ENCODE measurements at regions of chr2 and their contacts with region 1.

Region 1: GRCh38 chr2:201451292-201452057 is at the starts of genes STRADB and TRAK2:
- DNase-seq: peak; percentile 89 to 98 (median 95)
- ATAC-seq: peak; percentile 89
- H3K4me3 ChIP-seq: peak within 1 kb of the TSS; percentile 64 to 79
- H3K4me3 Mint-ChIP-seq: peak within 1 kb of the TSS; percentile 96
- H3K27ac ChIP-seq: peak within 1 kb of the TSS; percentile 74 to 79
- H3K27ac Mint-ChIP-seq: peak within 1 kb of the TSS; percentile 95
- H3K4me1 ChIP-seq: peaks cover 41% of the 10 kb centered on the region
- H3K4me1 Mint-ChIP-seq: peaks cover 59% of the 10 kb centered on the region
- H3K27me3 ChIP-seq: no peaks in the 10 kb centered on the region
- H3K27me3 Mint-ChIP-seq: no peaks in the 10 kb centered on the region
- CTCF ChIP-seq: no peak
- total RNA-seq, gene STRADB: 4.5 to 5.8 TPM
- total RNA-seq, gene TRAK2: 20.1 to 22.5 TPM

Region 2: GRCh38 chr2:200811336-200812121 is 639.9 kb before region 1 on chr2 and contains the start of gene BZW1:
- CTCF ChIA-PET with region 1: no interaction called
- POLR2A ChIA-PET with region 1: interaction called, 3 read pairs
- intact Hi-C with region 1: loop called in 1 of 2 experiments (anchors 2 kb)
- DNase-seq: peak; percentile 94 to 98 (median 97)
- ATAC-seq: peak; percentile 82
- H3K4me3 ChIP-seq: peak within 1 kb of the TSS; percentile 69 to 90
- H3K4me3 Mint-ChIP-seq: peak within 1 kb of the TSS; percentile 99
- H3K27ac ChIP-seq: peak within 1 kb of the TSS; percentile 98
- H3K27ac Mint-ChIP-seq: peak within 1 kb of the TSS; percentile 98
- H3K4me1 ChIP-seq: peaks cover 33% of the 10 kb centered on the region
- H3K4me1 Mint-ChIP-seq: peaks cover 48% of the 10 kb centered on the region
- H3K27me3 ChIP-seq: no peaks in the 10 kb centered on the region
- H3K27me3 Mint-ChIP-seq: no peaks in the 10 kb centered on the region
- CTCF ChIP-seq: no peak
- total RNA-seq, gene BZW1: 330 to 338 TPM

Region 3: DNA sequence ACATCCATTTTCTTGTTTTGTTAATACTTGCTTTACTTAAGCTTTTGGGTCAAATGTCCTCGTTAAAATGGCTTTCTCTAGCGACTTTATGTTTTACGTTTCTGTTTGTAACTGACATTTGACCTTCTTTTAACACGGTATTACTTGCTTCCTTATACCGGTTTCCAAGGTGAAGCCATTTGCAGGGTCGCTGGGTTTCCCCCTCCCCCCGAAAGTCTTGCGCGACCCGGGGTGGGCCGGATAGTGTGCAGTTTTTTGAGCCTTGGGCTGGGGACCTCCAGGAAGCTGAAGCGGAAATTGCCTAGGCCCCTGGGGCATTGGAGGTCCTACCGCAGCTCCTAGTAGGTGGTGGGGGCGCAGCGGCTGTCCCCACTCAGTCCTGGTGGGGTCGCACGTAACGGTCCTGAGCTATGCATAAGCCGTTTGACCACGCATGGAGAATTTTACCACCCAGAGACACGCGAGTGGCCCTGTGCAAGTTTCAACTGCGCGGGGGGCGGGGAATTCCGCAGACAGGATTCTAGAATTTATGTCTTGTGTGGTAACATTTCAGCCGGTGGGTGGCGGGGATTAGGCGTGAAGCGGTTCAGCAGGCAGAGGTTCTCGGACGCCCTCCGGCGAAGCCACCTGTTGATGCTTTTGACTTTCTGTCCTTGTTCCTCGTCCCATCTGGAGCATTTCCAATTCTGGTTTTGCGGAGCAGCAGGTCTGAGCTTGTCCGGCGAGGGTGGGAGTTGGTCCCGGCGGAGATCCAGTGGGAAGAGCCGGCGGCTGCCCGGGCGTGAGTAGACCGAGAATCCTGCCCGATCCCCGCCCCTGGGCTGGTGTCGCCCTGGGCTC is 333.1 kb before region 1 on chr2:
- CTCF ChIA-PET with region 1: no interaction called
- POLR2A ChIA-PET with region 1: interaction called, 5 read pairs
- intact Hi-C with region 1: loop called in 1 of 2 experiments (anchors 1 kb)
- DNase-seq: peak; percentile 77 to 94 (median 89)
- ATAC-seq: peak; percentile 43
- H3K4me3 ChIP-seq: peak overlapping the region; percentile 82 to 95
- H3K4me3 Mint-ChIP-seq: peak overlapping the region; percentile 99
- H3K27ac ChIP-seq: peak overlapping the region; percentile 92
- H3K27ac Mint-ChIP-seq: peak overlapping the region; percentile 100
- H3K4me1 ChIP-seq: peaks cover 47% of the 10 kb centered on the region
- H3K4me1 Mint-ChIP-seq: peaks cover 67% of the 10 kb centered on the region
- H3K27me3 ChIP-seq: no peaks in the 10 kb centered on the region
- H3K27me3 Mint-ChIP-seq: no peaks in the 10 kb centered on the region
- CTCF ChIP-seq: peak; percentile 64

Region 4: DNA sequence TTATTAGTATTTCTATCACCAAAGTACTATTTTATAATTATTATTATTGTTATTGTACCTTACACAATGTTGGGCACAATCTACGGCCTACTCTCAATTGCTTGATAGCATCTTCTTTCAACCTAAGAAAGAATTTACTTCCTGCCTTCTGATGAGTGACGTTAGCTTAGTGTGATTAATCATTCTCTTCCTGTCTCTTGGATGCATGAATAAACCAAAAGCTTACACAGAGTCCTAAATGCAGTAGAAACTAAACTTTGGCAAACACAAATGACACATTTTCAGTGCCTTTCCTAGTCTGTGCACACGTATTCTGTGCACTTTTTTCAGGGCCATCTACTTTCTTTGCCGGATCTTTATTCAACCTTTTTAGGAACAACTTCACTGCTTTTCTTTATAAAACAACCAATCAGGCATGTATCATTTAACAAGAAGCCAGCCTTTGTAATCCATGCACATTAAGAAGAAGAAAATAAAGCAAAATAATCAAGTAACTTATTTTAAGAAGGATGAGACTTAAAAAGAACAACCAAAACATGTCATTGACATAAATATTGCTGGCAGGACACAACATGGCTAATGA is 19.3 kb before region 1 on chr2:
- CTCF ChIA-PET with region 1: interaction called, 4 read pairs
- POLR2A ChIA-PET with region 1: interaction called, 21 read pairs
- intact Hi-C with region 1: loop called (anchors 1 to 2 kb)
- DNase-seq: peak in 2 of 9 experiments; percentile 36 to 63
- ATAC-seq: peak; percentile 93
- H3K4me3 ChIP-seq: no peak overlapping the region
- H3K4me3 Mint-ChIP-seq: peak overlapping the region; percentile 12
- H3K27ac ChIP-seq: peak overlapping the region; percentile 1 to 49
- H3K27ac Mint-ChIP-seq: peak overlapping the region; percentile 90
- H3K4me1 ChIP-seq: peaks cover 22% of the 10 kb centered on the region
- H3K4me1 Mint-ChIP-seq: peaks cover 50% of the 10 kb centered on the region
- H3K27me3 ChIP-seq: no peaks in the 10 kb centered on the region
- H3K27me3 Mint-ChIP-seq: no peaks in the 10 kb centered on the region
- CTCF ChIP-seq: no peak

Region 5: DNA sequence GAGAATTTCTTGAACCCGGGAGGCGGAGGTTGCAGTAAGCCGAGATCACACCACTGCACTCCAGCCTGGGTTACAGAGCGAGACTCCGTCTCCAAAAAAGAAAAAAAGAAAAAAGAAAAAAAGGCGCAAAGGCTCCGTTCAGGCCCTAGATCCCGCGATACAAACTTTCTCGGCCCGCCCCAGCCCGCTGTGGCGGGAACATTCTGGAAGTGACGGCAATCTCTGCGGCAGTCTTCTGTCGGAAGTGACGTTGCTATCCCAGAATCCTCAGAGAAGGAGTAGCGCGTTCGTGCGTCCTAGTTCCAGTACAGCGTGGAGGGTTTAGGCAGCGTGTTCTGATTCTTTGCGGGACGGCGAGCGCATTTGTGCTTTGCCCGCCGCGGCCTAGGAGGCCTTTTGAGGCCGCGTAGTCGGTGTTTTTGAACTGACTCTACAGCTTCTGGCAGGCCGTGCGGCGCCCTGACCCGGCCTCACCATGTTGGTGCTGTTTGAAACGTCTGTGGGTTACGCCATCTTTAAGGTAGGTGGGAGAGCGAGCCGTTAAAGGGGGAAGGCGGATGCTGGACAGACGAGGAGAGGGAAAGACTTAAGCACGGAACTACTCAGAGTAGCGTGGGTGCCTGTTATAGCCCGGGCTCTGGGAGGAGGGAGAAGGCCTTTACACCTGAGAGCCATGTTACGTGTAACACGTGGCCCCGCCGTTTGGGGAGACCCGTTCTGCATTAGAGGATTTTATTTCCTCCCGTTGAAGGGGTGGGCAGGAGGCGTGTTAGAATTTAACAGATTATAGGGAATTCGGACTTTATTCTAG is 814.2 kb after region 1 on chr2 and contains the start of gene NOP58:
- CTCF ChIA-PET with region 1: no interaction called
- POLR2A ChIA-PET with region 1: no interaction called
- intact Hi-C with region 1: loop called (anchors 1 to 10 kb)
- DNase-seq: peak; percentile 80 to 97 (median 87)
- ATAC-seq: peak; percentile 75
- H3K4me3 ChIP-seq: peak within 1 kb of the TSS; percentile 80 to 100
- H3K4me3 Mint-ChIP-seq: peak within 1 kb of the TSS; percentile 52
- H3K27ac ChIP-seq: peak within 1 kb of the TSS; percentile 97 to 98
- H3K27ac Mint-ChIP-seq: peak within 1 kb of the TSS; percentile 43
- H3K4me1 ChIP-seq: peaks cover 18% of the 10 kb centered on the region
- H3K4me1 Mint-ChIP-seq: peaks cover 21% of the 10 kb centered on the region
- H3K27me3 ChIP-seq: no peaks in the 10 kb centered on the region
- H3K27me3 Mint-ChIP-seq: no peaks in the 10 kb centered on the region
- CTCF ChIP-seq: no peak
- total RNA-seq, gene NOP58: 345 to 352 TPM

Region 6: DNA sequence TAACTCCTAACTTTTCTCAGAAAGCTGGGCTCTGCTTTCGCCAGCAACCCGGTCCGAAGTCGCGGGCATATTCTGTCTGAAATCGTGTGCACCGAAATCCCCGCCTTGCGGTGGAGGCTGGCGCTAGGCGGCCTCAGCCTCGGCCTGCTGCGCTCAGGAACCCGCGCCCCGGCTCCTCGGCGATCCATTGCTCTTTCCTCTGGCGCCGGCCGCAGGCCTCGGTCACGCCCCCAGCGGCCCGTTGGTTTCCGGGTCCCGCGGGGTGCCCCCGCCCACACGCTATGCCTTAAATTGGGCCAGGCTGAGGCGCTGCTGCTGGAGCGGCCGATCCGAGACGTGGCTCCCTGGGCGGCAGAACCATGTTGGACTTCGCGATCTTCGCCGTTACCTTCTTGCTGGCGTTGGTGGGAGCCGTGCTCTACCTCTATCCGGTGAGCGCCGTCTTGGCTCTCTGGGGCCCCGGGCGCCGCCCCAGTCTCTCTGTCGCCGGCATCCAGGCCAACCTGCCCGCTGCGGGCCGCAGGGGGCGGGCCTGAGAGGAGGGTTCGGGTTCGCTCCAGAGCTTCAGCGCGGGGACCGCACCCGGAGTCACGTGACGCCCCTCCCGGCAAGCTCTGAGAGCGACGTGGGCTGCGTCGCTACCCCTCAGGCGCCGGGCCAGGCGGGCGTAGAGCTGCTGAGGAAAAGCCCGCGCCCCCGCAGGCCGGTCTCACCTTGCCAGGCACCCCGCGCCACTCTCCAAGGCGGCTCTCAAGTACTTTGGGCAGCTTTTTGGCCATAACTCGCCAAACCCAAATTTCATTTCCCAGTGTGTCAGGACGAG is 1787.4 kb after region 1 on chr2 and contains the start of gene CYP20A1:
- CTCF ChIA-PET with region 1: no interaction called
- POLR2A ChIA-PET with region 1: no interaction called
- intact Hi-C with region 1: loop called in 1 of 2 experiments (anchors 5 kb)
- DNase-seq: peak; percentile 95 to 98 (median 97)
- ATAC-seq: peak; percentile 81
- H3K4me3 ChIP-seq: peak within 1 kb of the TSS; percentile 88 to 89
- H3K4me3 Mint-ChIP-seq: peak within 1 kb of the TSS; percentile 99
- H3K27ac ChIP-seq: peak within 1 kb of the TSS; percentile 92 to 98
- H3K27ac Mint-ChIP-seq: peak within 1 kb of the TSS; percentile 100
- H3K4me1 ChIP-seq: peaks cover 15% of the 10 kb centered on the region
- H3K4me1 Mint-ChIP-seq: peaks cover 30% of the 10 kb centered on the region
- H3K27me3 ChIP-seq: no peaks in the 10 kb centered on the region
- H3K27me3 Mint-ChIP-seq: no peaks in the 10 kb centered on the region
- CTCF ChIP-seq: no peak
- total RNA-seq, gene CYP20A1: 22.6 to 24.6 TPM

Measured in CD8-positive, alpha-beta T cell (primary cell).